PC-9 (cell line): ENCODE measurements at regions of chr18 and their contacts with region 1.

Region 1: GRCh38 chr18:50315100-50315871 is 27.8 kb upstream of the CXXC1 start:
- DNase-seq: no peak
- H3K4me3 ChIP-seq: no peak overlapping the region
- H3K27ac ChIP-seq: no peak overlapping the region
- H3K4me1 ChIP-seq: no peaks in the 10 kb centered on the region
- H3K27me3 ChIP-seq: no peaks in the 10 kb centered on the region
- CTCF ChIP-seq: no peak

Region 2: GRCh38 chr18:50249576-50249975 is 65.7 kb before region 1 on chr18:
- CTCF ChIA-PET with region 1: no interaction called
- POLR2A ChIA-PET with region 1: interaction called, 19 read pairs
- intact Hi-C with region 1: no loop called
- DNase-seq: no peak
- H3K4me3 ChIP-seq: no peak overlapping the region
- H3K27ac ChIP-seq: no peak overlapping the region
- H3K4me1 ChIP-seq: no peaks in the 10 kb centered on the region
- H3K27me3 ChIP-seq: no peaks in the 10 kb centered on the region
- CTCF ChIP-seq: no peak

Region 3: GRCh38 chr18:50350699-50351098 is 35.4 kb after region 1 on chr18:
- CTCF ChIA-PET with region 1: no interaction called
- POLR2A ChIA-PET with region 1: no interaction called
- intact Hi-C with region 1: no loop called
- DNase-seq: no peak
- H3K4me3 ChIP-seq: no peak overlapping the region
- H3K27ac ChIP-seq: no peak overlapping the region
- H3K4me1 ChIP-seq: peaks cover under 1% of the 10 kb centered on the region; the same call in 1 of the 2 replicates
- H3K27me3 ChIP-seq: no peaks in the 10 kb centered on the region; the same call in 1 of the 2 replicates
- CTCF ChIP-seq: no peak